ENCODE measurements at regions of chr3 and their contacts with region 1.

Region 1: DNA sequence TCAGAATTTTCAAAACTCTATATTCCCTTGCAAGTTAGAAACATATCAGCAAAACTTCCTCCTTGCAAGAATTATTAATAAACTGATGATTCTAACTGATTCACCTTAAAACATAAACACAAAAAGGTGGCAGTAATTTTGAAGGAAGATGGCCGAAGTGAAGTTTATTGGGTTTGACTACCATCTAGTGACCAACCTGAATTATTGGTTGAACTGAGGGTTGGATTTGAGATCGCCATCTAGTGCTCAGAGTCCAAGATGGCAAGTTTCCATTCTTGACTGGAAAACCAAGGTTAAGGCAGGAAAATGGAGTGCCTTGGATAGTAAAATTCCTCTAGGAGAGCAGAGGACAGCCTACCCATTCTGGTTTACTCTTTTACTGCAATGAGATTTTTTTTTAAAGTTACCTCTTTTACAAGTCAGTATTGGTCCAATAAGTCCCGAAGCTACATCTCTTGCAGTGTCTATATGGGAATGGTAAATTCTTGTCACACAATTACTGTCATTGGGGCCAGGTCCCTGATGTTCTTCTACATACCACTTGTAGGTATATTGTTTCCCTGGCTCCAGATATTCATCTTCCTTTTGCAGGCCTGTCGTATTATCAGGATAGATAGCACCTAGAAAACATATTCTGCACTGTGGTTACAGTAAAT is 51.6 kb upstream of the CP start:
- DNase-seq: peak; percentile 79
- H3K4me3 ChIP-seq: no peak overlapping the region
- H3K27ac ChIP-seq: no peak overlapping the region
- H3K27me3 ChIP-seq: no peaks in the 10 kb centered on the region
- CTCF ChIP-seq: peak; percentile 98

Region 2: DNA sequence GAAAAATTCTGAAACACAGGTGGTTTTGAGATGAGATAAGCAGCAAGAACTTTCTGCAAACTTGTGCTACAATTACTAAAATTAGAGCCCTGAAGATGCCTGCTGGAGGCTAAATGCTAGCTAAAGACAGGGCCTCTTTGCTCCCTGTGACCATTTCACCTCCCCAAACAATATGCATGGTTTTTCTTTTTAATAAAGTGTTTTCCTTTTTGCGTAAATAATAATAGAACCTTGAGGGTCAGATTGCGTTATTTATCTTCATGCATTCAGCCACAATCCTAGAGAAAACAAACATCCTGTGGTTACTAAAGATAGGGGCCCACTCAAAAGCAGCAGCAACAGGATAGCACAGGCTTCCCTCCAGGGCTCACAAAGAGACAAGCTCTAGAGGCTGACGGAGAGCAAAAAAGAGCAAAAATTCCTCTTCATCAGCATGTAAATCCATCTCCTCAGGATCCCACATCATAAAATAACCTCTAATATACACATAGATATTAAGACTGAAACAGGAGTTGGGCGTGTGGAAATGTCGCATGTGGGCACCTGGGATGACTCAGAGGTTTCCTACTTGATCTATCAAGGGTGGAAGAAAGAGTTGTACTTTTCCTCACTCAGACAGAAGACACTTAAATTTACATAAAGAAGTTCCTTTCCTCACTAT is 25.1 kb before region 1 on chr3:
- CTCF ChIA-PET with region 1: interaction called, 10 read pairs
- POLR2A ChIA-PET with region 1: no interaction called
- DNase-seq: no peak
- H3K4me3 ChIP-seq: no peak overlapping the region
- H3K27ac ChIP-seq: no peak overlapping the region
- H3K27me3 ChIP-seq: no peaks in the 10 kb centered on the region
- CTCF ChIP-seq: no peak

Region 3: GRCh38 chr3:149340310-149340933 is 67.2 kb after region 1 on chr3:
- CTCF ChIA-PET with region 1: interaction called, 10 read pairs
- POLR2A ChIA-PET with region 1: no interaction called
- DNase-seq: no peak
- H3K4me3 ChIP-seq: no peak overlapping the region
- H3K27ac ChIP-seq: peak overlapping the region; percentile 63
- H3K27me3 ChIP-seq: no peaks in the 10 kb centered on the region
- CTCF ChIP-seq: no peak

Region 4: GRCh38 chr3:149480325-149481017 is 207.2 kb after region 1 on chr3:
- CTCF ChIA-PET with region 1: interaction called, 11 read pairs
- POLR2A ChIA-PET with region 1: no interaction called
- DNase-seq: peak; percentile 73
- H3K4me3 ChIP-seq: no peak overlapping the region
- H3K27ac ChIP-seq: no peak overlapping the region
- H3K27me3 ChIP-seq: no peaks in the 10 kb centered on the region
- CTCF ChIP-seq: peak; percentile 98

Region 5: GRCh38 chr3:149536429-149536828 is 263.2 kb after region 1 on chr3:
- CTCF ChIA-PET with region 1: no interaction called
- POLR2A ChIA-PET with region 1: no interaction called
- DNase-seq: no peak
- H3K4me3 ChIP-seq: no peak overlapping the region
- H3K27ac ChIP-seq: no peak overlapping the region
- H3K27me3 ChIP-seq: no peaks in the 10 kb centered on the region
- CTCF ChIP-seq: no peak